ENCODE measurements at regions of chr3 and their contacts with region 1.

Region 1: GRCh38 chr3:151227807-151228665 is 25.0 kb upstream of the GPR171 start:
- DNase-seq: peak; percentile 81
- H3K4me3 ChIP-seq: no peak overlapping the region
- H3K27ac ChIP-seq: peak overlapping the region; percentile 34
- H3K4me1 ChIP-seq: no peaks in the 10 kb centered on the region
- H3K27me3 ChIP-seq: no peaks in the 10 kb centered on the region
- CTCF ChIP-seq: peak; percentile 89

Region 2: DNA sequence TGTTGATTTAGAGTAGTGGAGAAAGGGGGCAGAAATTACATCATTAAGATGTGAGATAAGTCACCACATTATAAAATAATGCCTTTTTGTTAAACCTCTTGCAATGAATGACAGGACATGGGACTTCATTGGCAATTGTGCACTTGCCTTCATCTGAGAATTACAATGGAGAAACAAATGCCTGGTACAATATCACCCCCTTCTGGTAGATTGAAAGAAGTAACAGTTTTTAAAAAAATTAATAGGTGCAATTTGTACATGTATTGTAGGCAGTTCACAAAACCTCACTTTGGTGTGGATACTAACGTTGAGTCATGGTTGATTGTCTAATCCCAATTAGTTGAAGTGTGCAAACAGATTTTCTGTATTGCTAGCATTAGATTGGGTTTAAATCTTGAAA is 54.9 kb after region 1 on chr3:
- intact Hi-C with region 1: loop called (anchors 5 kb)
- DNase-seq: no peak
- H3K4me3 ChIP-seq: no peak overlapping the region
- H3K27ac ChIP-seq: no peak overlapping the region
- H3K4me1 ChIP-seq: peaks cover 2% of the 10 kb centered on the region
- H3K27me3 ChIP-seq: no peaks in the 10 kb centered on the region
- CTCF ChIP-seq: peak; percentile 68

Region 3: DNA sequence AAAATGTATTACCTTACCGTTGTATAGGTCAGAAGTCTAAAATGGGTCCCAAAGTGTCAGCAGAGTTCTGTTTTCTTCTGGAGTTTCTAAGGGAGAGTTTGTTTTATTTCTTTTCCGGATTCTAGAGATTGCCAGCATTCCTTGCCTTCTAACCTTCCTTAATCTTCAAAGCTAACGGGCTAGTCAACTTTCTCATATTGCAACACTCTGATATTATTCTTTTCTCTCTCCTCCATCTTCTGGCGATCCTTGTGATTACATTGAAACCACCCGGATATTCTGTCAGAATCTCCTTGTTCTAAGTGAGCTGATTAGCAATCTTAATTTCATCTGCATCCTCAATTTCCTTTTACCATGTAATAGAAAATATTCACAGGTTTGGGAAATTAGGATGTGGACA is 469.5 kb after region 1 on chr3:
- intact Hi-C with region 1: no loop called
- DNase-seq: no peak
- H3K4me3 ChIP-seq: no peak overlapping the region
- H3K27ac ChIP-seq: no peak overlapping the region
- H3K4me1 ChIP-seq: no peaks in the 10 kb centered on the region
- H3K27me3 ChIP-seq: no peaks in the 10 kb centered on the region
- CTCF ChIP-seq: no peak

Measured in colonic mucosa (tissue), 4 donors.